ENCODE measurements at regions of chrX and their contacts with region 1.

Region 1: DNA sequence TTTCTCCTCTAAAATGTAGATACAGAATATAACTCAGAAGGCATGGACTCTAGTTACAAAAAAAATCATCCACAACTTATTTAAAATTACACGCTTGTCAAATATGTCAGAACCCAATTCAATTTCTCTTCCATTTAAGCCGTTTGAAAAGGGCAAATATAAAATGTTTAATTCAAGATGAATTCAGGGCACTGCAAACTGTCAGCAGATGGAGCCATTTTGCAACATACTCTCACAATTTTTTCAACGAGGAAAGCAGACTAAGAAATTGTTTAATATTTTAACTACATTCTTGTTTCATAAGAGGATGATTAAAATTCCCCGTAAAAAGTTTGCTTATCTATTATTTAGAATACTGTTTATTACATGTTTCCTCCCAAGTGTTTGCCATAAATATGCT is 321.3 kb upstream of the CPXCR1 start:
- DNase-seq: no peak
- H3K4me3 ChIP-seq: no peak overlapping the region
- H3K27ac ChIP-seq: no peak overlapping the region
- H3K4me1 ChIP-seq: no peaks in the 10 kb centered on the region
- H3K27me3 ChIP-seq: no peaks in the 10 kb centered on the region
- CTCF ChIP-seq: no peak
- POLR2A ChIP-seq: no peak

Region 2: GRCh38 chrX:88604433-88605221 is 178.9 kb after region 1 on chrX:
- intact Hi-C with region 1: loop called (anchors 10 kb)
- DNase-seq: no peak
- H3K4me3 ChIP-seq: no peak overlapping the region
- H3K27ac ChIP-seq: no peak overlapping the region
- H3K4me1 ChIP-seq: no peaks in the 10 kb centered on the region
- H3K27me3 ChIP-seq: peaks cover 0 to 7% (median 0%) of the 10 kb centered on the region in 7 donors
- CTCF ChIP-seq: no peak
- POLR2A ChIP-seq: no peak